Activated naive CD4-positive, alpha-beta T cell treated with anti-CD3 and anti-CD28 coated beads for 36 hours (primary cell): ENCODE measurements at regions of chr18 and their contacts with region 1.

Region 1: GRCh38 chr18:830315-830901 is 18.4 kb upstream of the YES1 start:
- DNase-seq: peak; percentile 42
- H3K4me3 Mint-ChIP-seq: peak overlapping the region; percentile 16
- H3K27ac Mint-ChIP-seq: peak overlapping the region; percentile 72
- H3K4me1 Mint-ChIP-seq: peaks cover 21% of the 10 kb centered on the region
- H3K27me3 Mint-ChIP-seq: no peaks in the 10 kb centered on the region

Region 2: DNA sequence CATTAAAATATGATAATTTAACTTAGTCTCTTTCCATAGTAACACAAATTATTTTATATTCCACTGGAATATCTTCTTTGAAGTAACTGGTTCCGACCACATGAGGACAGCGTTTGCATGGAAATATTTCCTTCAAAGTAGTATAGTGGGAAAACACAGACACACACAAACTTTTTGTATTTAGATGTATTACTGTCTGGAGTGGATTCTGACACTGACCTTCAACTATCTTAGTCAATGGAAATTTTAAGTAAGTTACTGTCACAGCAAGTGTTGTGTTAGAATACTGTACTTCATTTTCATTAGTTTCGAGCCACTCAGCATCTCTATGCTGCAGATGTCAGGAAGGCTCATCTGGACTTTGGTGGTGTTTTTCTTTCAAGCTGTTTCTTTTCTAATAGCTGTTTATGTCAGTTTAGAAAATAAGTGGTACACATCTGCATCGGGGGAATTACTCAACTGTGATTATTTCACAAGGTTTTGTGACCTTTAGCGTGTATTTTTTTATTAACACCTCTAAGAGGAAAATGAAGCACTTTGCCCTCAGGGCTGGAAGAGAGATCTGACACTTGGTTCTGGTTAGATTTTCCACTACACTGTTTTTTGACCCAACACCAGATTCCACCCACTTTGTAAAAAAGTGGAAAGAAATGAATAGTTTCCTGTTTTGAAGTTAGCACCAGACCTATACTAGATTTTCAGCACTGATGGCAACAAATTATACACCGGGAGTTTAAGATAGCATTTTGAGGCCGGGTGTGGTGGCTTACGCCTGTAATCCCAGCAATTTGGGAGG is 543.7 kb before region 1 on chr18:
- CTCF ChIA-PET with region 1: no interaction called
- intact Hi-C with region 1: loop called (anchors 5 kb)
- DNase-seq: peak; percentile 12
- H3K4me3 Mint-ChIP-seq: no peak overlapping the region
- H3K27ac Mint-ChIP-seq: no peak overlapping the region
- H3K4me1 Mint-ChIP-seq: peaks cover 3% of the 10 kb centered on the region
- H3K27me3 Mint-ChIP-seq: peaks cover 13% of the 10 kb centered on the region

Region 3: GRCh38 chr18:658001-658946 is 172.1 kb before region 1 on chr18:
- CTCF ChIA-PET with region 1: interaction called, 4 read pairs
- intact Hi-C with region 1: loop called (anchors 1 kb)
- DNase-seq: peak; percentile 88
- H3K4me3 Mint-ChIP-seq: peak overlapping the region; percentile 93
- H3K27ac Mint-ChIP-seq: peak overlapping the region; percentile 87
- H3K4me1 Mint-ChIP-seq: peaks cover 14% of the 10 kb centered on the region
- H3K27me3 Mint-ChIP-seq: peaks cover 29% of the 10 kb centered on the region

Region 4: DNA sequence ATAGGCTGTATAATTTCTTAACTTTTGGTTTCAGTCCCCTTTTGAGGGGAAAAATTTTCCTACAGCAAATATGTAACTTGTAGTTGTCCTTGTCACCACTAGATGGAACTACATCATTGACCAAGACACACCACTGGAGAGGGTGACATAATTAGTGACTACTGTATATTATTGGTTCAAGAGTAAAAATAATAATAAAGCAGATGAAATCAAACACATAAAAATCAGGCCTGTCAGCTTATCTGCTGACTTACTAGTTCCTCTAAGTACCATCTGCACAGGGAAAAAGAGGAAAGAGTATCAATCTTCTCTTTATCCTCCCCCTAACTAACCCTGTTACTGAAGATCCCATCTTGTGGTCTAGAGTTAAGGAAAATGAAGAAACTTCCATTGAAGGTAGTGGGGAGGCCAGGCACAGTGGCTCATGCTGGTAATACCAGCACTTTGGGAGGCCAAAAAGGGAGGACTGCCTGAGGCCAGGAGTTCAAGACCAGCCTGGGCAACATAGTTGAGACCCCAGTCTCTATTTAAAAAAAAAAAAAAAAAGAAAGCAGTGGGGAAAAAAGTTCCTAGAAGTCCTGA is 88.4 kb before region 1 on chr18:
- CTCF ChIA-PET with region 1: interaction called, 142 read pairs
- intact Hi-C with region 1: loop called (anchors 1 kb)
- DNase-seq: no peak
- H3K4me3 Mint-ChIP-seq: no peak overlapping the region
- H3K27ac Mint-ChIP-seq: no peak overlapping the region
- H3K4me1 Mint-ChIP-seq: no peaks in the 10 kb centered on the region
- H3K27me3 Mint-ChIP-seq: no peaks in the 10 kb centered on the region

Region 5: DNA sequence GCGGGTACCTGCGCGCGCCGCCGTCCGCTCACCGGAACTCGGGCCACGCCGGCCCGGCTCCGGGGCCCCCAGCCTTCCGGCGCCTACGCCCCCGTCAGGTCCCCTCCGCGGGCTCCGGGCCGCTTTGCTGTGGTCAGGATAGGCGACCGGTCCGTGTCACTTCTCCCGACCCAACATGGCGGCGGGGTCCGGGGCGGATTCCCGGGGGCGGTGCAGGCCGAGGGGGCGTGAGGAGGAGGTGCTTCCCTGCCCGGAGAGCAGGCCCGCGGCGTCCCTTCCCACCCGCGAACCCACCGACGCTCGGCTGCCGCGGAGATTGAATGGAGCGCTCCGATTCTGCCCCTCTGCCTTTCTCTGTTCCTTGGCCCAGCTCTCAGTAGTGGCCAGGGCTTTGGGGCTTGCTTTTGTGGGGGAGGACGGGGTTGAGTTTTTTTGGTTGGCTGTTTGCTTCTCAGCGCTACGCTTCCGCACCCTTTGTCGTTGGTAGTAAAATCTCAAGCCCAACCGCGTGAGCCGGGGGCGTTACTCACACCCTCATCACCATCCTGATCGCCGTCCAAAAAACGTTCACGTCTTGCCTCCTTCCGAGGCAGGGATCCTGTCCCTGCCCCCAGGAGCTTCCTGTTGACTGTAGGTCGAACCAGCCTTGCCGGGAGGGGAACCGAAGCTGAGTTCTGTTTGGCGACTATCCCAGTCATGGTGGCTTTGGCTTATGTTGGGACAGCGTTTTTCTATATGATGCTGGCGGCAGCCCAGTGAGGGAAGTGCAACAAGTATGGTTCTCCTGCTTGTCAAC is 17.8 kb before region 1 on chr18:
- CTCF ChIA-PET with region 1: interaction called, 50 read pairs
- intact Hi-C with region 1: loop called (anchors 1 kb)
- DNase-seq: peak; percentile 82
- H3K4me3 Mint-ChIP-seq: peak overlapping the region; percentile 95
- H3K27ac Mint-ChIP-seq: peak overlapping the region; percentile 99
- H3K4me1 Mint-ChIP-seq: peaks cover 54% of the 10 kb centered on the region
- H3K27me3 Mint-ChIP-seq: no peaks in the 10 kb centered on the region